Activated CD4-positive, alpha-beta T cell treated with anti-CD3 and anti-CD28 coated beads, Interleukin-2, amount 10 ng/mL, durations not matched to agents 24 days and 14 days (primary cell): ENCODE measurements at regions of chr12 and their contacts with region 1.

Region 1: DNA sequence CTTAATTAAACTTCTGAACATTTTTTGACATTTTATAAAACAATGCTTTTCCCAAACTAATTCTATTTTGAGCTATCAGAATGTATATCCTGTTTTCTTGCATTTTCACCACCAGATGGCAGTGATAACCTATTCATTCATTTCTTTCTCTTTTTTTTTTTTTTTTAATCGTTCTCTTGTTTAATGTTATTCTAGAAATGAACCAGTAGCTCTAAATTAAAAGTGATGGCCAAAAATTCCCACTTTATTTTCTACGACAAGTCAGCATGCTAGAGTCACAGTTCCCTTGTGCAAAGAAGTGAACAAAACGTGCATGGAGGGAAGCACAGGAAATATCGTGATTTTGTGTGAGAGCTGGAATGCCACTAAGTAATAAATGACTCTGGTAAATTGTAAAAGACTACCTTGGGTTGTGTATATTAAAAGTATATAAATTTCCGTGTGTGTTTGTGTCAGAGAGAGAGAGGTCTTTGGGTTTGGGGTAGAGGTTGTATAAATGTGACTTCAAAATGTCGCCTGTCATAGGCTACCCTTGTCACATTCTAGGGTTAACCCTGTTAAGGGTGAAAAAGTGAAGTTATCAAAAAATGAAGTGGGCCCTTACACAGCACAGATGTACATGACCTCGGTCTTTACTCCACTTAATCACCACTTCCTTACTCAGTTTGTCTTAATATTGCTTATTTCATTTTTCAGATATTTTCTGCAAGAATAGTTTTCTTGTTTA is 40.4 kb upstream of the LDHB start:
- DNase-seq: no peak
- H3K4me3 Mint-ChIP-seq: no peak overlapping the region
- H3K27ac Mint-ChIP-seq: no peak overlapping the region
- H3K4me1 Mint-ChIP-seq: no peaks in the 10 kb centered on the region
- H3K27me3 Mint-ChIP-seq: peaks cover 10% of the 10 kb centered on the region

Region 2: GRCh38 chr12:22018860-22019259 is 320.8 kb after region 1 on chr12:
- intact Hi-C with region 1: loop called (anchors 2 kb)
- DNase-seq: no peak
- H3K4me3 Mint-ChIP-seq: no peak overlapping the region
- H3K27ac Mint-ChIP-seq: no peak overlapping the region
- H3K4me1 Mint-ChIP-seq: no peaks in the 10 kb centered on the region
- H3K27me3 Mint-ChIP-seq: peaks cover 2% of the 10 kb centered on the region